Aorta (tissue), 5 donors: ENCODE measurements at regions of chr2 and their contacts with region 1.

Region 1: DNA sequence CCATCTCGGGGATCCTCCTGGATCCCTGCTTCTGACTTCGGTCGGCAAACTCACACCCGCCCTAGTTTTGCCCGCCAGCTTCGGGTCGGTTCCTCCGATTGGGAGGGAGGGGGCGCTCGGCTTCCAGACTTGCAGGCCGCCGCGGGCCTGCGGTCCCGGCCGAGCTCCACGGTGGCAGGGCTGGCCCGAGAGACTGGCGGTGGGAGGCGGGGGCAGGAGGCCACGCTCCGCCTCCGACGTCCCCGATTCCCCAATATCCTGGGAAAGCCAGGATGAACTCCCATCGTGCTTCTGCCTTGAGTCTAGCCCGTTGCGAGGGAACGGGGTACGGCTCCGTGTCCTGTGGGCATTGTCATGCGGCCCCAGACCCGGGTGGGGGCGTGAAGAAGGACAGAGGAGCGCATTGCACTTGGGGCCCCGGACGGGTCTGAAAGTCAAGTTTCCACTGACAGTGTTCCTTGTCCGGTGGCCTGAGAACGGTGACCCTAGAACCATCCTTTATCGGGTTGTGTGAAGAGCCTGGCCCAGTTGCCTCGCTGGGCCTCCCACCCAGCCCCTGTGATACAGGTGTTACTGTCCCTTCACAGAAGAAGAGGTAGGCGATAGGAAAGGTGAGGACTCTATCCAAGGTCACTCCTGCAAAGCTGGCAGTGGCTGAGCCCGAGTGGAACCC is 2.4 kb upstream of the INHBB start:
- DNase-seq: peak; percentile 86 to 95
- ATAC-seq: peak; percentile 90
- H3K4me3 ChIP-seq: no peak overlapping the region
- H3K27ac ChIP-seq: no peak overlapping the region
- H3K4me1 ChIP-seq: no peaks in the 10 kb centered on the region
- H3K27me3 ChIP-seq: no peaks in the 10 kb centered on the region

Region 2: GRCh38 chr2:120441744-120442471 is 98.3 kb after region 1 on chr2:
- intact Hi-C with region 1: loop called in 1 of 2 experiments (anchors 10 kb)
- DNase-seq: peak; percentile 70 to 87
- ATAC-seq: peak; percentile 60
- H3K4me3 ChIP-seq: peak overlapping the region; percentile 6 to 17
- H3K27ac ChIP-seq: no peak overlapping the region
- H3K4me1 ChIP-seq: no peaks in the 10 kb centered on the region
- H3K27me3 ChIP-seq: no peaks in the 10 kb centered on the region

Region 3: DNA sequence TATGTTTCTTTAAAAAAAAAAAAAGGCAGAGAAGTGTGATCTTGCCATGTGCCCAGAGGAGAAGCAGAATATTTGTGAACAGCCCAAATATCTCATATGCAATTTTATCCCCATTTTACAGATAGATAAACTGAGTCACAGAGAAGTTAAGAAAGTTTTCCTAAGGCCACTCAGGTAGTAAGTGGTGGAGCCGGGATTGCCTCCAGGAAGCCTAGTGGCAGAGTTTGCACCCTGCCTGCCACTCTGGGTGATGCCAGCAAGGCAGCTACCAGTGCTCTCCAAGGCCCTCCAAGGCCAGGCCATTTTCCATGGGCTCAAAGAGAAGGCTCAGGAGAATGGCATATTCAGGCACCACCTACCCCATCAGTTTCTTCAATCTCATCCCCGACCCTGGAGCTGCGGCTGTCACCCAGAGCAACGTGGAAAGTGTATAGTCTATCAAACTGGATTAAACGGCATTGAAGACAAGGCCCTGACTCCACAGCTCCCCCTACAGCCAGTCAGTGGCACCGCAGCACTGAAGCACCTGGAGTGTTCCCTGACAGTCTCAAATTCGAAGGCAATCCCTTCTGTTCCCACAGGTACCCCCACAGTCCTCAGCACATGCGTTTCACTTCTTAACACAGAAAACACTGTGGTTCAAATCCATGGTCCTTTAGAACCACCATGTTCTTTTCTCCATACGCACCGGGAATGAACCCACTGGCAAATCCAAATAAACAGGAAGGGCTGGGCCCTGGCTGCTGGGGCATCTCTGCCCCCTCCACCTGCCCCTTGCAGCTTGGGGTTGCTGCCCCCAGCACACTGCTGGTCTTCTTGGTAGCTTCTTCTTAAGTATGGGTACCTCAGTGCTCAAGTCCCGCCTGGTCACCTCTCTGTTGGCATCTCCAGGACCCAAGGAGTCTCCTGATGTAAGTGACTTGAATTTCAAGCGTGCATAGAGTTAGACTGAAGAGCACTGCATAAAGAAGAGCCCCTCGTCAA is 177.7 kb after region 1 on chr2:
- intact Hi-C with region 1: loop called (anchors 5 to 10 kb)
- DNase-seq: peak in 1 of 2 donors; percentile 82
- ATAC-seq: no peak
- H3K4me3 ChIP-seq: no peak overlapping the region
- H3K27ac ChIP-seq: no peak overlapping the region
- H3K4me1 ChIP-seq: no peaks in the 10 kb centered on the region
- H3K27me3 ChIP-seq: no peaks in the 10 kb centered on the region

Region 4: GRCh38 chr2:120552800-120553481 is 209.4 kb after region 1 on chr2:
- intact Hi-C with region 1: loop called in 1 of 2 experiments (anchors 1 kb)
- DNase-seq: peak; percentile 89 to 93
- ATAC-seq: peak; percentile 87
- H3K4me3 ChIP-seq: no peak overlapping the region
- H3K27ac ChIP-seq: no peak overlapping the region
- H3K4me1 ChIP-seq: peaks cover 0 to 3% of the 10 kb centered on the region in 2 donors
- H3K27me3 ChIP-seq: no peaks in the 10 kb centered on the region

Region 5: DNA sequence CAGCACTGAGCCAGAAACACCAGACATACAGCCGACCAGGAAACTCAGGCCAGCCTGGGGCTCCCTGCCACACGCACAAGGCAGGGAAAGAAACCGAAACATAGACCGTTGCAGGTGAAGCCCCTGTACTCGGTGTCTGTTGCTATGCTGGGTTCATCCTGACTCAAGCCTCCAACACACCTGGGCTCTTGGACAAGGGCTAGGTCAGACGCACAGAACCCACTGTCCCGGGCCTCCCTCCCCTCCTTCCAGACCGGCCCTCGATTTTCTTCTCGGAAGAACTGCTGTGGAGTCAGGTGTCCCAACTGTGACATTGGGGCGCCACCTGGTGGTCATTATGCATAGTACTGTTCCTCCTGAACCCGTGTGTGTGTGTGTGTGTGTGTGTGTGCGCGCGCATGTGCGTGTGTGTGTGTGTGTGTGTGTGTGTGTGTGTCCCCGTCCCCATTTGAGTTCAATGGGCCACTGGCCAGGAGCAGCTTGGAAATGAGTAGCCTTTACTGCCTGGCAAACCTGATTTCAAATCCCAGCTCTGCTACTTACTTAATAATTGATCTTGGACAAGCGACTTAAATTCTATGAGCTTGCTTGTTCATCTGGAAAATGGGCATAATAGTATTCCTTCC is 336.7 kb after region 1 on chr2:
- intact Hi-C with region 1: loop called (anchors 1 kb)
- DNase-seq: peak; percentile 87 to 91
- ATAC-seq: peak; percentile 84
- H3K4me3 ChIP-seq: no peak overlapping the region
- H3K27ac ChIP-seq: no peak overlapping the region
- H3K4me1 ChIP-seq: no peaks in the 10 kb centered on the region
- H3K27me3 ChIP-seq: no peaks in the 10 kb centered on the region

Region 6: DNA sequence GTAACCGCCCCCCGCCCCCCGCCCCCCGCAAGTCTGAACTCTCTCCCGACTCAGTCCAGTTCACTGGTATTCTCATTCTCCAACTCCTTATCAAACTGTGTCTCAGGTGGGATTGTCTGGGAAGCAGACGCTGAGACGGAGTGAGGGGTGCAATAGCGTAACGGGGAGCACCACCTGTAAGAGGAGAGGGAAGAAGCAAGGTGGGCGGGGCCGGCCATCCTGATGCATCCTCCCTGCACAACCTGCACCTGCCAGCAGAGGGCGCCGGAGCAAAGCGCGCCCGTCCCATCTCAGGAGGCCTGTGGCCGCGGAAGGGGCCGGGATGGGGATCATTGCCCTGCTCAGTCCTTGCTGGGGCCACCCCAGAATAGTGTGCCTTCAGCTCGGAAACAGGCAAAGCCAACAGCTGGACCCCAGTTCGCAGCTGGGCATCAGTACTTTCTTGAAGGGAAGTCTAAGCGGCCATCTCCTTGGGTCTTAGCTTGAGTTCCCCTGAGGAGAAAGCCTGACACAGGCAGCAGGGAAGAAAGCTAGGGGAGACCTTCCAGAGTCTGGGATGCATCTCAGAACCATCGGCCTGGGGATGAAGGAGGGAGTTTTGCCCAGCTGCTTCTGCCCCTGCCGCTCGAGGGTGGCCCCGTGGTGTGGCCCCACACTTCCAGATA is 733.4 kb after region 1 on chr2:
- intact Hi-C with region 1: loop called (anchors 10 kb)
- DNase-seq: peak; percentile 62 to 89
- ATAC-seq: peak; percentile 54
- H3K4me3 ChIP-seq: no peak overlapping the region
- H3K27ac ChIP-seq: no peak overlapping the region
- H3K4me1 ChIP-seq: no peaks in the 10 kb centered on the region
- H3K27me3 ChIP-seq: peaks cover 0 to 3% of the 10 kb centered on the region in 2 donors